ENCODE measurements at regions of chr10 and their contacts with region 1.

Region 1: GRCh38 chr10:103977204-103977603 is 10.3 kb downstream of the SLK start:
- DNase-seq: no peak
- ATAC-seq: no peak
- H3K4me3 ChIP-seq: no peak overlapping the region
- H3K4me3 Mint-ChIP-seq: no peak overlapping the region
- H3K27ac ChIP-seq: no peak overlapping the region
- H3K27ac Mint-ChIP-seq: no peak overlapping the region
- H3K4me1 ChIP-seq: peaks cover 6 to 14% of the 10 kb centered on the region in 2 donors
- H3K4me1 Mint-ChIP-seq: peaks cover 44 to 73% (median 65%) of the 10 kb centered on the region in 7 donors
- H3K27me3 ChIP-seq: no peaks in the 10 kb centered on the region
- H3K27me3 Mint-ChIP-seq: no peaks in the 10 kb centered on the region

Region 2: DNA sequence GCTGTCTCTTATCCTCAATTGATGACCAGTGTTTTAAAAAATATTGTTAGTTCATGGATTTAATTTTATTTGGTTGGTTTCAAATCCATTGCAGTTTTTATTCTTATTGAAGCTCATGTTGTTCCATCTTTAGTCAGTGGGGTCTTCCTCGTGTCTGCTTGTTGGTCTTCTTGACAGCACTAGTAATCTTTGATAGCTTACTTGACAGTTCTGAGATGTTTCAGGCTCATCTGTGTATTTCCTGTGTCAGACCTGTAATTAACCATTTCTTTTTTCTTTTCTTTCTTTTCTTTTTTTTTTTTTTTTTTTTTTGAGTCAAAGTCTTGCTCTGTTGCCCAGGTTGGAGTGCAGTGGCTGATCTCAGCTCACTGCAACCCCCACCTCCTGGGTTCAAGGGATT is 17.9 kb after region 1 on chr10:
- CTCF ChIA-PET with region 1: no interaction called
- POLR2A ChIA-PET with region 1: no interaction called
- intact Hi-C with region 1: loop called in 1 of 2 experiments (anchors 2 kb)
- DNase-seq: no peak
- ATAC-seq: no peak
- H3K4me3 ChIP-seq: no peak overlapping the region
- H3K4me3 Mint-ChIP-seq: no peak overlapping the region
- H3K27ac ChIP-seq: no peak overlapping the region
- H3K27ac Mint-ChIP-seq: peak overlapping the region in 1 of 9 donors; percentile 43
- H3K4me1 ChIP-seq: no peaks in the 10 kb centered on the region
- H3K4me1 Mint-ChIP-seq: peaks cover 7 to 23% (median 19%) of the 10 kb centered on the region in 7 donors
- H3K27me3 ChIP-seq: no peaks in the 10 kb centered on the region
- H3K27me3 Mint-ChIP-seq: no peaks in the 10 kb centered on the region